Uterus (tissue), 4 donors: ENCODE measurements at regions of chr19 and their contacts with region 1.

Region 1: DNA sequence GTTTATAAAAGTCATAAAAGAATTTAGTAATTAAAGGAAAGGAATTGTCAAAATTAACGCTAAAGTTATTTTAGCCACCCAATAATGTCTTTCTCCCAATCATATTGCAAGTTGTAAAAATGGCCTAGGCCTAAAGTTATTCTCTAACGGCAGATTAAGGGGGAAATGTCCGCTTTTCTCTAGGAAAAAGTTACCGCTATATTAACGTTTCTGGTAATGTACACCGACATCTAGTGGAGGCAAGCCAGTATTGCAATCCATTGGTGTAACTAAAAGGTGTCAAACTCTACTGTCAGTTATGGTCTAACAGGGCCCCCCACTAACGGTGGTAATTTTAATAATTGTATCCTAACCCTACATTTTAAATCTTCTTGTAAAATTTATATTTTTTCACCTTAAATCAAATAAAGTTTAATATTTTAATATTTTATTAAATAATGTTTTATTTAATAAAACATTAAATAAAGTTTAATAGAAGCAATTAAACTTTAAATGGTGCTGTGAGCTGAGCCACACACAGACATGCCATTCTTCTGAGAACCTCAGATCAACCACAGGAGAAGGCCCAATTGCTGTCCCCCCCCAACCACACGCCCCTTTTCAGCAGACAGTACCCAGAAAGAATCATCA is 35.9 kb upstream of the ZSCAN5A start:
- DNase-seq: peak; percentile 24 to 57
- H3K4me3 ChIP-seq: no peak overlapping the region
- H3K27ac ChIP-seq: no peak overlapping the region
- H3K4me1 ChIP-seq: peaks cover 0 to 3% of the 10 kb centered on the region in 2 donors
- H3K27me3 ChIP-seq: no peaks in the 10 kb centered on the region
- CTCF ChIP-seq: peak; percentile 74 to 86 (median 83)
- POLR2A ChIP-seq: no peak

Region 2: DNA sequence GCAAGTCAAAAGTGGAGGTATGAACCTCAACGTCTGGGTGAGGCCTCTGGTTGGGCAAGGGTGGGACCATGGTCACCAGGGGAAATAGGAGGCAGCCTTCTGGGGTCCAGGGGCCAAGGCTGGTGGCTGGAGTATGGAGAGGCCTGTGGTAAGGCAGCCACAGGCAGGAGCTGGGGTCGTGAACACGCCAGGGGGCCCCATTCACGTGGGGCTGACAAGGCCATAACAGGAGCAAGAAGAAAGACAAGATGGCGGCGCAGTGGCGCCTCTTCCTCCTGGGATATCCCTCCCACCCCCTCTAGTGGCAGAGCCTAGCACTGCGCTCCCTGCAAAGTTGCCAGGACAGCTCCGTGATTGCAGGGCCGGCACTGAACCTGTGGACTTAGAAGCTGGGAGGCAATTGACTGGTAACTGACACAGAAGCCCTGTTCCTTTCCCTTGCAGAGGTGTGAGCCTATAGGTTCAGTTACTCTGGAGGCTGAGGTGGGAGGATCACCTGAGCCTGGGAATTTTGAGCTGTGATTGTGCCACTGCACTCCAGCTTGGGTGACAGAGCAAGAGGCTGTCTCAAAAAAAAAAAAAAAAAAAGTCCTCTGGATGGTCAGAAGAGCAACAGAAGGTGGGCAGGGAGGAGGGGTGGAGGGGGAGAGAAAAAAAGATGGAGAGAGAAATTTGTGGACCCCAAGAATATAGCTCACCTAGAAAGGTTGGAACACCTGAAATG is 97.7 kb before region 1 on chr19:
- intact Hi-C with region 1: loop called (anchors 10 kb)
- DNase-seq: peak; percentile 37 to 44
- H3K4me3 ChIP-seq: no peak overlapping the region
- H3K27ac ChIP-seq: no peak overlapping the region
- H3K4me1 ChIP-seq: no peaks in the 10 kb centered on the region
- H3K27me3 ChIP-seq: no peaks in the 10 kb centered on the region
- CTCF ChIP-seq: peak; percentile 24 to 54 (median 44)
- POLR2A ChIP-seq: no peak

Region 3: GRCh38 chr19:56333505-56333904 is 17.0 kb before region 1 on chr19:
- intact Hi-C with region 1: no loop called
- DNase-seq: no peak
- H3K4me3 ChIP-seq: no peak overlapping the region
- H3K27ac ChIP-seq: no peak overlapping the region
- H3K4me1 ChIP-seq: no peaks in the 10 kb centered on the region
- H3K27me3 ChIP-seq: no peaks in the 10 kb centered on the region
- CTCF ChIP-seq: peak in 3 of 4 experiments; percentile 10 to 35 (median 33)
- POLR2A ChIP-seq: no peak

Region 4: GRCh38 chr19:56562766-56563165 is 212.2 kb after region 1 on chr19:
- intact Hi-C with region 1: no loop called
- DNase-seq: no peak
- H3K4me3 ChIP-seq: no peak overlapping the region
- H3K27ac ChIP-seq: no peak overlapping the region
- H3K4me1 ChIP-seq: no peaks in the 10 kb centered on the region
- H3K27me3 ChIP-seq: no peaks in the 10 kb centered on the region
- CTCF ChIP-seq: no peak
- POLR2A ChIP-seq: no peak